GM23248 (cell line): ENCODE measurements at regions of chr12 and their contacts with region 1.

Region 1: GRCh38 chr12:116015525-116015924 is 262.0 kb downstream of the MED13L start:
- DNase-seq: peak; percentile 77
- H3K4me3 ChIP-seq: no peak overlapping the region
- H3K27ac ChIP-seq: no peak overlapping the region
- H3K4me1 ChIP-seq: no peaks in the 10 kb centered on the region
- H3K27me3 ChIP-seq: no peaks in the 10 kb centered on the region

Region 2: DNA sequence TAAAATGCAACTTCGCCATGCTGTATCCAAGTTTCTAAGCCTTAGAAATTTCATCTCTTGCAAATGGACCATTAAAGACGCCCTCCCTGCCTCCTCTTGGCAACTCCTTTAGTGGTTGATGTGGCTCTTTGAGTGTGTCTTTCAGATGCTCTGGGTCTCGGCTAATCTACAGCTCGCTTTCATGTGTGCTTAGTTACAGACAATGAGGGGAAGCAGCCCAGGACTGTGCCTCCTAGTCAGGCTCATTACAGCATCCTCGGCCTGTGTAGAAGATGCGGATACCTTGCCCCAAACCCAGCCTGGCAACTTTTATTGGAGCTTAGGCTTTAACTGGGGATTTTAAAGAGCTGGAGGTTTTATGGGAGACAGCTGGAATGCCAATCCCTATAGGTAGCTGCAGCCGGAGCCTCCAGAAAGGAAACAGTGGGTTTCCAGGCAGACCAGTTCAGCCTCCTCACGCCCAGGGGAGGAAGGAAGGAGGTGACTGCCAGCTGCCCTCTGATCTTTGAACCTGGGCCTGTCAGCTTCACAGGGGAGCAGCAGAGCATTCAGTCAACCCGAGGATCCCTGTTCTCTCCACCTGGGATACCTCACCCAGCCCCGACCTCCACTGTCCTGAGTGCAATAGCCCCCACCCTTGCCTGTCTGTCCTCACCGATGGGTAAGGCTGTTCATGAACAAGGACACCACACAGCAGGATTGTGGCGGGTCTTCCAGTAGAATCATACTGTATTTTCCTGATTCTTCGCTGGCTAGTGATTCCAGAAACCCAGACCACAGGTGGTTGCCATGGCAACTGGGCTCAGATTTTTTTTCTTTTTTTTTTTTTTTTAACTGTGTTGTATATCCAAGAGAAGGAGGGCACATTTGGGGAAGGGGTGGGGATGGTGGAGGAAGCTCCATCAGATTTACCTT is 376.5 kb before region 1 on chr12:
- in situ Hi-C with region 1: no loop called
- DNase-seq: no peak
- H3K4me3 ChIP-seq: no peak overlapping the region
- H3K27ac ChIP-seq: no peak overlapping the region
- H3K4me1 ChIP-seq: no peaks in the 10 kb centered on the region
- H3K27me3 ChIP-seq: no peaks in the 10 kb centered on the region

Region 3: GRCh38 chr12:116236148-116236731 is 220.7 kb after region 1 on chr12:
- in situ Hi-C with region 1: loop called (anchors 25 kb)
- DNase-seq: peak; percentile 72
- H3K4me3 ChIP-seq: no peak overlapping the region
- H3K27ac ChIP-seq: no peak overlapping the region
- H3K4me1 ChIP-seq: peaks cover 15% of the 10 kb centered on the region
- H3K27me3 ChIP-seq: no peaks in the 10 kb centered on the region

Region 4: DNA sequence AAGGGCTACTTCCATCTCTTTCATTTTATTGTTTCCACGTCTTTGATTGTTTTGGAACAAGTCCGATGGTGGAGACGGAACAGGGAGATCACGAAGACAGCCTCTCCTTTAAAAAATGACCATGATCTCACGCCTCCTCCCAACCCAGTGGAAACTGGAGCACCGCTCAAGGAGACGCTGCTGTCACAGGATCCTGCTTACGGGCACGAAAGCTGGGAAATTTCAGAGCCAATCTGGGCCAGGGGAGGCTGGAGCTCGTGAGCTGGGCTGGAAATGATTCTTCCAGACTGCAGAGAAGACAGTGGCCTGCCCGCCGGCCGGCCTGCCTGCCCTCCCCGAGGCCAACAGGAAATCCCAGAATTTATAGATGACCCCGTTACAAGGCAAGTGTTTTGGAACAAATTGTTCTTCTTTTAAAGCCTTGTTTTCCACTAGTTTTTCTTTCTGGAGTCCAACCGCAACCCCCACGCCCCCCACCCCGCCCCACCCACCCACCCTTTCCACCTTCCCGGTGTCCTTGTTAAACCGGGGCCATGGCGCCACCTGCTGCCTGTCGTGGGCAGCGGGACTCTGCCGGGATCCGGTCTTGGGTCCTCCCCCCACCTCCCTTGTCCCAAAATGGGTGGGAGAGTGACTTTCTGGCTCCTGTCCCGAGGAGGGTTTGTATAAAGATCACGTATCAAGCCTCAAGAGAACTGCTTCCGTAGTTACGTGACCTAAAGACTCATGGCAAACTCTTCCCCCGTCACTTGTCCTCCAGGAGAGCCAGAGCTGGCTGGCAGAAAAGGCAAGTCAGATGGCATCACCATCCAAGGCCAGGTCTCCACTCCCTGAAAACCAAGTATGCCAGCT is 584.0 kb after region 1 on chr12:
- in situ Hi-C with region 1: loop called (anchors 25 kb)
- DNase-seq: peak; percentile 83
- H3K4me3 ChIP-seq: peak overlapping the region; percentile 67
- H3K27ac ChIP-seq: peak overlapping the region; percentile 84
- H3K4me1 ChIP-seq: peaks cover 47% of the 10 kb centered on the region
- H3K27me3 ChIP-seq: no peaks in the 10 kb centered on the region